Activated naive CD8-positive, alpha-beta T cell treated with anti-CD3 and anti-CD28 coated beads, Interleukin-2, amount 10 ng/mL, durations not matched to agents 7 days and 5 days (primary cell): ENCODE measurements at regions of chr11 and their contacts with region 1.

Region 1: GRCh38 chr11:28090052-28090749 is 17.8 kb downstream of the KIF18A start:
- DNase-seq: no peak
- ATAC-seq: no peak
- H3K4me3 Mint-ChIP-seq: no peak overlapping the region
- H3K27ac Mint-ChIP-seq: no peak overlapping the region
- H3K4me1 Mint-ChIP-seq: peaks cover 7% of the 10 kb centered on the region
- H3K27me3 Mint-ChIP-seq: no peaks in the 10 kb centered on the region

Region 2: GRCh38 chr11:27770576-27770975 is 319.6 kb before region 1 on chr11:
- POLR2A ChIA-PET with region 1: no interaction called
- DNase-seq: no peak
- ATAC-seq: no peak
- H3K4me3 Mint-ChIP-seq: no peak overlapping the region
- H3K27ac Mint-ChIP-seq: no peak overlapping the region
- H3K4me1 Mint-ChIP-seq: no peaks in the 10 kb centered on the region
- H3K27me3 Mint-ChIP-seq: no peaks in the 10 kb centered on the region

Region 3: DNA sequence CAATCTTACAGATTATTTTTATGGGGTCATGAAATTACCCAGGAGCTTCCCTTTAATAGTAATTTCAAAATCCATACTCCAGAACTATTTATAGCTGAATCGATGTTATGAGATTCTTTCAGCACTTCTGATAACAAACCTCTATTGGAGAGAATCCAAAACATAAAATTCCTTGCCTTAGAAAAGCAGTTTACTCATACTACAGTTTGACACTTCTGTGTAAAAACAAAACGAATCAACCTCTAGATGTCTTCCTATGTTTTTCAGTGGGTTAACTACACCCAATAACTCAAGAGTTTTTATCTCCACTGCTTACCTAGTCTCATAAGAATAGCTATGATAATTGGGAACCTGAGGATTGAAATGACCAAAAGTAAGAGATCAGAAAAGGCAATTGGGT is 17.9 kb before region 1 on chr11:
- POLR2A ChIA-PET with region 1: no interaction called
- DNase-seq: no peak
- ATAC-seq: no peak
- H3K4me3 Mint-ChIP-seq: no peak overlapping the region
- H3K27ac Mint-ChIP-seq: no peak overlapping the region
- H3K4me1 Mint-ChIP-seq: no peaks in the 10 kb centered on the region
- H3K27me3 Mint-ChIP-seq: no peaks in the 10 kb centered on the region

Region 4: DNA sequence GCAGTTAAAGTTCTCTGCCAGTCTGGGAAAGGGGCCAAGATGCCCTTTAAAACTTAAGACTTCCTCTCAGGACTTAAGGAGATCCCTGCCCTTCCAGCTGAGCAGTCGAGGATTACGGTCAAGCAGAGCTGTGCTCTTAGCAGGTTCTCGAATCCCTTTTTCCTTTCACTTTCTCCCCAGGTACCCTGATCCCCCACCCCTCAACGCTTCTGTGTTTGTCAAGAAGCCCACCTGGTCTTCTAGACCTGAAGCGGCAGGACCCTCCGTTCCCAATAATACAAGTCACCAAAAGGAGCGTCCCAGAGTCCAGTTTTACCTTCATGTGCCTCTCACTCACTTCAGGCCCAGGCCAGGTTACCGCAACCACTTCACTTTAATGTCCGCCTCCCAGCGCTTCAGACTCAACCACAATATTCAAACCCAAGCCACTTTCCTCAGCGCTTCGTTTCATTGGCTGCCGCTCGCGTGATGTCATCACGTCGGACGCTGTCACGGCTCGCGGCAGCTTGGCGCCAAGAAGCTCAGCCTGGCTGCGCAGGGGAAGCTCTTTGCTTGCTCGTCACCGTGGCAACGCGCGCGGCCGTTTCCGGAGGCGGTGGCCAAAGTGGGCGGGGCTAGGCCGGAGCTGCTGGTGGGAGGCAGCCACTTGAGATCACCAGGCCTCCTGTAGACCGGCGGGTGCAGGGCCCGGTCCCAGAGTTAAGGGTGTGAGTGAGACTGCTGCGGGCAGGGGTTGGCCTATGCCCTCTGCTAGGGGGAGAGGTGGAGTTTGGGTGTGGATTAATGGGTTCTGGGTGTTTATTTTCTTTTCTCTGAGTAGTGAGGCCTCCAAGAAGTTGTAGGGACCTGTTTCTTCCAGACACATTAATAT is 17.8 kb after region 1 on chr11 and contains the starts of genes KIF18A and METTL15:
- POLR2A ChIA-PET with region 1: interaction called, 10 read pairs
- DNase-seq: peak; percentile 99
- ATAC-seq: peak; percentile 92
- H3K4me3 Mint-ChIP-seq: peak within 1 kb of the TSS; percentile 100
- H3K27ac Mint-ChIP-seq: peak within 1 kb of the TSS; percentile 100
- H3K4me1 Mint-ChIP-seq: peaks cover 48% of the 10 kb centered on the region
- H3K27me3 Mint-ChIP-seq: no peaks in the 10 kb centered on the region
- total RNA-seq, gene KIF18A: 21.4 to 21.6 TPM
- total RNA-seq, gene METTL15: 16.1 to 18.3 TPM